ENCODE measurements at regions of chr17 and their contacts with region 1.

Region 1: DNA sequence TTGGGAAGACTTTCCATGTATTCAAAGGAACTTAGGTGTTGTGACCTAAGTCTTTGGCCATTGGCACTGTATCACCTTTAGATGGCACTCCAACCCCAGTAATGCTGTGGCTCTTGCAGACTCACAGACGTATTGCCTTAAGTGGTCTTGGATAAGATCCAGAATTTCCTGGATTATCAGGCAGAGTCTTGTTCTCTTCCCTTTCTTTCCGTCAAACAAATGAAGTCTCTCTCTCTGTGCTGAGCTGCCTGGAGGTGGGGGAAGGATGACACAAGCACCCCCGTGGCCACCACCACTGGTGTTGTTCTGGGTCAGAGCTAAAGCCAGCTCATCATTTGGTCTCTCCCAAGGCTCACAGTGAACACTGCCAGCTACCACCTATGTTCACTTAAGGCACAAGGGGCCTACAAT is 789.9 kb upstream of the KIF2B start:
- DNase-seq: peak; percentile 50
- H3K4me3 ChIP-seq: no peak overlapping the region
- H3K27ac ChIP-seq: no peak overlapping the region
- H3K4me1 ChIP-seq: no peaks in the 10 kb centered on the region
- H3K27me3 ChIP-seq: no peaks in the 10 kb centered on the region
- CTCF ChIP-seq: peak; percentile 52 to 69

Region 2: GRCh38 chr17:53046781-53047180 is 13.9 kb after region 1 on chr17:
- CTCF ChIA-PET with region 1: no interaction called
- dilution Hi-C with region 1: no loop called
- in situ Hi-C with region 1: no loop called
- intact Hi-C with region 1: no loop called
- DNase-seq: no peak
- H3K4me3 ChIP-seq: no peak overlapping the region
- H3K27ac ChIP-seq: no peak overlapping the region
- H3K4me1 ChIP-seq: no peaks in the 10 kb centered on the region
- H3K27me3 ChIP-seq: no peaks in the 10 kb centered on the region
- CTCF ChIP-seq: no peak

Region 3: DNA sequence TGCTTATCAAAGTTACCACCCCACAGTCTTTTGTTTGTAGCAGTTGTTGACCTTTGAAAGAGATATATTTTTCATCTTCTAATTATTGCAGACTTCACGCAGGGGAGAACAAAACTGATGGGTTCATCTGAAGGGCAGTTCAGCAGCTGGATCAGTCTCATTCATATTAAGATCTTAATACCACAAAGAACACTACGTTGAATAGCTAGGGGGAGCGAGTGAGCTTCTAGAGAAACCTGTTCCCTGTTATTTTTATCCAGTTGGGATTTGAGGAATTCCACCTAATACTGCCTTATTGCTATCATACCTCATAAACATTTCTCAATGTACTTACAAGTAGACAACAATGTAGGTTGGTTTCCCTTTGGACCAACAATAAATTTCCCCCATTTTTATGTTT is 483.8 kb after region 1 on chr17:
- CTCF ChIA-PET with region 1: no interaction called
- dilution Hi-C with region 1: no loop called
- in situ Hi-C with region 1: no loop called
- intact Hi-C with region 1: loop called (anchors 5 kb)
- DNase-seq: peak; percentile 5
- H3K4me3 ChIP-seq: no peak overlapping the region
- H3K27ac ChIP-seq: no peak overlapping the region
- H3K4me1 ChIP-seq: no peaks in the 10 kb centered on the region
- H3K27me3 ChIP-seq: no peaks in the 10 kb centered on the region
- CTCF ChIP-seq: peak; percentile 27 to 62

Region 4: DNA sequence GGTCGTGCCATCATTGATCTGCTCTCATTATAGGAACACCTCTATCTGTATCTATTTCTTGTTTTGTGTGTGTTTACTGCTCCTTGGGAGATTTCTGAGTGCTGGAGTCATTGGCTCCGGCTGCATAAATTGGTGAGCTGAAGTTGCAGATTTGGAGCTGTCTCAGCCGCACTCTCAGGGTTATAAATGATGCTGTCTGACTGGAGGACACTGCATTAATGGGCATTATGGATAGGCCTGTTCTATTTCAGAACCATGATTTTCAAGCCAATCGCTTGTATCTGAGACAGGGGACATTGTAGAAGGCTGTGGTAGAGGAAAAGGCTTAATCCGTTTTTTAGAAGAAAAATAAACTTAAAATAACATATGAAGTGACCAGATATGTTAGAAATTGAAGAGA is 663.4 kb after region 1 on chr17:
- CTCF ChIA-PET with region 1: no interaction called
- dilution Hi-C with region 1: no loop called
- in situ Hi-C with region 1: no loop called
- intact Hi-C with region 1: loop called (anchors 5 kb)
- DNase-seq: no peak
- H3K4me3 ChIP-seq: no peak overlapping the region
- H3K27ac ChIP-seq: no peak overlapping the region
- H3K4me1 ChIP-seq: no peaks in the 10 kb centered on the region
- H3K27me3 ChIP-seq: no peaks in the 10 kb centered on the region
- CTCF ChIP-seq: no peak

Region 5: GRCh38 chr17:54172096-54172984 is 1139.5 kb after region 1 on chr17:
- CTCF ChIA-PET with region 1: no interaction called
- dilution Hi-C with region 1: no loop called
- in situ Hi-C with region 1: loop called in 1 of 2 experiments (anchors 25 kb)
- intact Hi-C with region 1: loop called (anchors 1 kb)
- DNase-seq: peak; percentile 44
- H3K4me3 ChIP-seq: no peak overlapping the region
- H3K27ac ChIP-seq: no peak overlapping the region
- H3K4me1 ChIP-seq: no peaks in the 10 kb centered on the region
- H3K27me3 ChIP-seq: no peaks in the 10 kb centered on the region
- CTCF ChIP-seq: peak; percentile 73 to 80

Region 6: DNA sequence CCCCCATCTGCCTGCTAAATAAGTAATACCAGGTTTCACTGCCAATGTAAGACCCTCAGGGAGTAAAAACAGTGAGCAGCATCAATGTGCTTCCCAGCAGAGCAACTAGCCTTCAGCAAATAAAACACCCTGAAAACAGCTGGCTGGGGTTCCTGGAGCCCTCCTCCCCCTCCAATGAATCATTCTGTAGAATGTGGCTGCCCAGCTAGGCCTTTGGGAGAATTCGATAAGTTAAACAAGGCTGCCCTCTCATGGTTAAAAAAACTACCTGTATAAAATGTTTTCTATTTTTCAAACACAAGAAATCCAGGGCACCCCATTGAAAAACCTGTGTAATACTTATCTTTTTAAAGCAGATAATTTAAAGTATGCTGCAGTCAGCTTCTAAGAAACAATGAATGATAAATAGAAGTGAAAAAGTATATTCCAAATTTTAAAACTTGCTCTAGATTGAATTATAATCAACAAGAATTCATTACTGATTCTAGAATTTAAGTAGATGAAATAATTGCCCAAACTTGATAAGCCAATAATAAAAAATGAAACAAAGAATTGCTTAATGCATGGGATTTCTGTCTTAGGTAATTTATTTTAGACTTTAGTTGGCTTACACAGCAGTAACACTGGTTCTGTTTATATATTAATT is 1858.4 kb after region 1 on chr17:
- CTCF ChIA-PET with region 1: no interaction called
- dilution Hi-C with region 1: no loop called
- in situ Hi-C with region 1: loop called in 1 of 2 experiments (anchors 25 kb)
- intact Hi-C with region 1: loop called (anchors 1 kb)
- DNase-seq: peak; percentile 64
- H3K4me3 ChIP-seq: no peak overlapping the region
- H3K27ac ChIP-seq: no peak overlapping the region
- H3K4me1 ChIP-seq: peaks cover 3% of the 10 kb centered on the region
- H3K27me3 ChIP-seq: no peaks in the 10 kb centered on the region
- CTCF ChIP-seq: peak in 1 of 2 donors; percentile 51

Measured in mammary epithelial cell (primary cell).